CD4-positive, alpha-beta T cell (primary cell): ENCODE measurements at regions of chr12 and their contacts with region 1.

Region 1: DNA sequence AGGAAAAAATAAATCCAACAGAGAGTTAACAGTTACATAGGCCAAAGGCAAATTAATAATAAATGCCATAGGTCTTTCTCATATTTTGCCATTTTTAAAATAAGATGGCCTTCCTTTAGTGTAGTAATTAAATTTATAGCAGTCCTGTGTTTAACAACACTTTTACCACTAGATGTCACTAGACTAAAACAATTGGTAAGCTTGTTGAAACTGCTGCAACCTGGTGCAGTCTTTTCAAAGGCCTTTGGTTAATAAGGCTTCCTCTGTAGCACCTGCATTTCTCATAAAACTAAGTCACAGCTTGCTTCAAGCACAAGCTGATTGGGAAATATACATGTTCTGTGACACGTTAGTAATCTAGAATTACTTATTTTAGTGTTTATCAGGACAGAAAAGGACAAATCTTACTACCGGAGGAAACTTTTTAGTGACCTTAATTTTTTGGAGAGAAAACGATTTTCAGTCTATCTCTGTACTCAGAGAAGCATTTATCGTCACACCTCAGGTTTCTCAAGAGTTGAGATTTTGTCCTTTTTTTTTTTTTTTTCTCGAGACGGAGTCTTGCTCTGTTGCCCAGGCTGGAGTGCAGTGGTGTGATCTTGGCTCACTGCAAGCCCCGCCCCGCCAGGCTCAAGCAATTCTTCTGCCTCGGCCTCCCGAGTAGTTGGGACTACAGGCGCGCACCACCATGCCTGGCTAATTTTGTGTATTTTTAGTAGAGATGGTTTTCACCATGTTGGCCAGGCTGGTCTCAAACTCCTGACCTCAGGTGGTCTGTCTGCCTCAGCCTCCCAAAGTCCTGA is 20.0 kb downstream of the BORCS5 start:
- DNase-seq: peak in 6 of 14 experiments; percentile 15 to 88 (median 59)
- ATAC-seq: peak; percentile 47
- H3K4me3 ChIP-seq: no peak overlapping the region
- H3K4me3 Mint-ChIP-seq: no peak overlapping the region
- H3K27ac ChIP-seq: no peak overlapping the region
- H3K27ac Mint-ChIP-seq: peak overlapping the region; percentile 62
- H3K4me1 ChIP-seq: peaks cover 20% of the 10 kb centered on the region
- H3K4me1 Mint-ChIP-seq: peaks cover 49% of the 10 kb centered on the region
- H3K27me3 ChIP-seq: no peaks in the 10 kb centered on the region
- H3K27me3 Mint-ChIP-seq: no peaks in the 10 kb centered on the region
- CTCF ChIP-seq: peak; percentile 83

Region 2: GRCh38 chr12:12442548-12443071 is 65.8 kb after region 1 on chr12:
- CTCF ChIA-PET with region 1: interaction called, 6 read pairs
- POLR2A ChIA-PET with region 1: interaction called, 9 read pairs
- intact Hi-C with region 1: loop called in 1 of 2 experiments (anchors 1 kb)
- DNase-seq: peak in 3 of 14 experiments; percentile 47 to 52 (median 52)
- ATAC-seq: peak; percentile 1
- H3K4me3 ChIP-seq: no peak overlapping the region
- H3K4me3 Mint-ChIP-seq: peak overlapping the region; percentile 45
- H3K27ac ChIP-seq: peak overlapping the region; percentile 83
- H3K27ac Mint-ChIP-seq: peak overlapping the region; percentile 95
- H3K4me1 ChIP-seq: peaks cover 74% of the 10 kb centered on the region
- H3K4me1 Mint-ChIP-seq: peaks cover 81% of the 10 kb centered on the region
- H3K27me3 ChIP-seq: no peaks in the 10 kb centered on the region
- H3K27me3 Mint-ChIP-seq: no peaks in the 10 kb centered on the region
- CTCF ChIP-seq: no peak

Region 3: GRCh38 chr12:12474931-12475795 is 98.3 kb after region 1 on chr12:
- CTCF ChIA-PET with region 1: interaction called, 7 read pairs
- POLR2A ChIA-PET with region 1: interaction called, 19 read pairs
- intact Hi-C with region 1: loop called (anchors 2 kb)
- DNase-seq: peak in 12 of 14 experiments; percentile 18 to 89 (median 44)
- ATAC-seq: peak; percentile 84
- H3K4me3 ChIP-seq: peak overlapping the region; percentile 38
- H3K4me3 Mint-ChIP-seq: peak overlapping the region; percentile 59
- H3K27ac ChIP-seq: peak overlapping the region; percentile 55 to 91
- H3K27ac Mint-ChIP-seq: peak overlapping the region; percentile 93
- H3K4me1 ChIP-seq: peaks cover 50% of the 10 kb centered on the region
- H3K4me1 Mint-ChIP-seq: peaks cover 57% of the 10 kb centered on the region
- H3K27me3 ChIP-seq: no peaks in the 10 kb centered on the region
- H3K27me3 Mint-ChIP-seq: no peaks in the 10 kb centered on the region
- CTCF ChIP-seq: no peak

Region 4: DNA sequence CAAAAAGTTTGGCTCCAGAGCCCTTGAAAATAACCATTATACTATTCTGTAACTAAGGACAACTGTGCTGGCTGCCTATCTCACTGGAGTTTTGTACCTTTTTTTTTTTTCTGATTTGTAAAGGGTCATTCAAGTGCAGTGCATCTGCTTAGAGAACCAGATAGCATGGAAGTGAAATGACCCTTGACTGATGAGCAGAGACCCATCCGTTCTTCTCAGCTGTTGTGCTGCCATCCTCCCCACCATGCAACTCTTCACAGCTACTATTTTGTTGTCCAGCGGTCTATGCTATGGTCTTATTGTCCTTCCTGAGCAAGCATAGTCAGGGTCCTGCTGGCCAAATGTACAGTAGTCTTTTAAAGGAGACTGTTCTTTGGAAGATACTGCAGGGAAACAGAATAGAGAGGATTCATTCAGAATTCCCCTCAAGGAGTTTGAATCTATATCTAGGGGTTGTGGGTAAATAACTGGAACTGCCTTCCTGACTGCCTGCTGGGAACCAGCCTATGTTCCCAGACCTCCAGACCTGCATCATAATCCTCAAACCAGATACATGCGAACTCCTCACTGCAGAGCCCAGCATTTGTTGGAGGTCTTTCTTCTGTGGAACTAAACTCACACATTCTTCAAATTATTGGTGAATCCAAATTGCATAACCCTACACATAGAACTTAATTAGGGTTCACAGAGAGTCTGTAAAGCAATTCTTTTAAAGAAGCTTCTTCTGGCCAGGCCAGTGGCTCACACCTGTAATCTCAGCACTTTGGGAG is 278.0 kb after region 1 on chr12:
- CTCF ChIA-PET with region 1: interaction called, 14 read pairs
- POLR2A ChIA-PET with region 1: interaction called, 10 read pairs
- intact Hi-C with region 1: loop called (anchors 1 kb)
- DNase-seq: no peak
- ATAC-seq: no peak
- H3K4me3 ChIP-seq: no peak overlapping the region
- H3K4me3 Mint-ChIP-seq: no peak overlapping the region
- H3K27ac ChIP-seq: no peak overlapping the region
- H3K27ac Mint-ChIP-seq: no peak overlapping the region
- H3K4me1 ChIP-seq: peaks cover 8% of the 10 kb centered on the region
- H3K4me1 Mint-ChIP-seq: peaks cover 17% of the 10 kb centered on the region
- H3K27me3 ChIP-seq: no peaks in the 10 kb centered on the region
- H3K27me3 Mint-ChIP-seq: no peaks in the 10 kb centered on the region
- CTCF ChIP-seq: no peak

Region 5: DNA sequence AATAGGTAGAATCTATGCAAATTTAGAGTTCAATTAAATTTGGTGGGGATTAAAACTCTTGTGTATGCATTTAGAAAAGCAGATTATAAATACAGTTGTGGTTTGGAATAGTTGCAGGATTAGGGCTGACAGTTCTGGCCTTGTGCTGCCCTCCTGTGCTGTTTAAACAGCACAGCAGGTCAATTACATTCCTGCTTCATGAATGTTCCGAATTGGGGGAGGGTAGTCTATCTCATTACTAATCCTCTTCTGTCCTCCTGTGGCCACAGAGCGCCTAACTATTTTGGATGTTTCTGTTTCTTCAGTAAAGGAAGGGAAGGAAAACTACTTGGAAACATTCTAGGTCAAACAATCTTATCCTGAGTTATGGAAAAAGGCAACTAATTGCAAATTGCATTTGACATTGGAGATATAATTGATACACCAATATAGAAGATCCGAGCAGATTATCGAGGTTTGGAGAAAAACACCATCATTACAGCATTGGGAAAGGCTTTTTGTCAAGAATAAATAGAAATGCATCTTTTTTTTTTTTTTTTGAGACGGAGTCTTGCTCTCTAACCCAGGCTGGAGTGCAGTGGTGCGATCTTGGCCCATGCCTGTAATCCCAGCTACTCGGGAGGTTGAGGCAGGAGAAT is 327.9 kb after region 1 on chr12:
- CTCF ChIA-PET with region 1: interaction called, 3 read pairs
- POLR2A ChIA-PET with region 1: no interaction called
- intact Hi-C with region 1: loop called (anchors 2 kb)
- DNase-seq: peak in 7 of 14 experiments; percentile 22 to 84 (median 57)
- ATAC-seq: peak; percentile 88
- H3K4me3 ChIP-seq: no peak overlapping the region
- H3K4me3 Mint-ChIP-seq: peak overlapping the region; percentile 32
- H3K27ac ChIP-seq: no peak overlapping the region
- H3K27ac Mint-ChIP-seq: peak overlapping the region; percentile 69
- H3K4me1 ChIP-seq: peaks cover 29% of the 10 kb centered on the region
- H3K4me1 Mint-ChIP-seq: peaks cover 29% of the 10 kb centered on the region
- H3K27me3 ChIP-seq: no peaks in the 10 kb centered on the region
- H3K27me3 Mint-ChIP-seq: no peaks in the 10 kb centered on the region
- CTCF ChIP-seq: peak; percentile 73

Region 6: DNA sequence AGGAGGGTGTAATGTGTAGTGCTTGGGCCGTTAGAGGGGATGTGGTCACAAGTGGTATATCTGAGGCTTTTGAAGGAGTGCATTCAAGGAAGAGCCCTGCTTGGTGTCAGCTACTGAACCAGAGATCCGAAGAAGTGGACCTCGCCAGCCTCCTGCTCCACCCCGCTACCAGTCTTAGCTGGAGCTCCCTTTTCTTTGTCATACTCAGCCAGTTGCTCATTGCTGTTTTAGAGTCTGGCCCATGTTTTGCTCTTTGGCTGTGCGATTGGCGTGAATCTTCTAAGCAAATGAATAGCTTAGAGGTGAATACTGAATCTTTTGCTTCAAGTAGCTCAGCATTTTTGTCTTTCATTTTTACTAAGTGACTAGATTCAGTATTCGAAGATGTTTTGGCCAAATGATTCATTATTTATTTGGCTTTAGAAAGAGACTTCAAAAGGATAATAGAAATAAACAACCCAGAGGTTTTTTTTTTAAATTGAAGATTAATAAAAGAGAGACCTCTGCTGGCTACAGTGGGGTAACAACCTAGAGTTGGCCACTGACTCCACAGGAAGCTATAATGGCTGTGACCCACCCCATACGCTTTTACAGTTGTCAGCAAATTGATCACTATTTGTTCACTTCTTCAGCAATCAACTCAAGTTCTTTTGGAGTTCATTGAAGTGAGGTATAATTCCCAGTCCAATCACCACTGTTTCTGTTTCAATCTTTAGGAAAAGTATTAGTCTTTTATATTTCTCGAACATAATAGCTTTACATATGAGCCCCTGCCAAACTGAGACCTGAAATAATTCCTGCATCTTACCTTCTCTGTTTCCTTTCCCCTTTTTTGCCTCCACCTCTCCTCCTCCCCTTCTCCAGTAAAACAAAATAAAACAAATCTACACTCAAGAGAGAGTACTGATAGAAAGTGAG is 360.2 kb after region 1 on chr12:
- CTCF ChIA-PET with region 1: interaction called, 17 read pairs
- POLR2A ChIA-PET with region 1: interaction called, 23 read pairs
- intact Hi-C with region 1: loop called (anchors 1 to 2 kb)
- DNase-seq: peak in 13 of 14 experiments; percentile 15 to 87 (median 33)
- ATAC-seq: peak; percentile 82
- H3K4me3 ChIP-seq: peak overlapping the region; percentile 34
- H3K4me3 Mint-ChIP-seq: peak overlapping the region; percentile 58
- H3K27ac ChIP-seq: peak overlapping the region; percentile 34 to 40
- H3K27ac Mint-ChIP-seq: peak overlapping the region; percentile 85
- H3K4me1 ChIP-seq: peaks cover 30% of the 10 kb centered on the region
- H3K4me1 Mint-ChIP-seq: peaks cover 41% of the 10 kb centered on the region
- H3K27me3 ChIP-seq: no peaks in the 10 kb centered on the region
- H3K27me3 Mint-ChIP-seq: no peaks in the 10 kb centered on the region
- CTCF ChIP-seq: peak; percentile 71